Transverse colon (tissue), 4 donors: ENCODE measurements at regions of chr20 and their contacts with region 1.

Region 1: GRCh38 chr20:21048841-21049273 is 57.3 kb downstream of the LINC00237 start:
- DNase-seq: peak; percentile 28
- H3K4me3 ChIP-seq: no peak overlapping the region
- H3K27ac ChIP-seq: no peak overlapping the region
- H3K4me1 ChIP-seq: no peaks in the 10 kb centered on the region
- H3K27me3 ChIP-seq: peaks cover 7% of the 10 kb centered on the region
- CTCF ChIP-seq: peak; percentile 36 to 72 (median 51)
- EP300 ChIP-seq: no peak
- POLR2A ChIP-seq: no peak

Region 2: GRCh38 chr20:20993372-20993771 is 55.5 kb before region 1 on chr20:
- in situ Hi-C with region 1: no loop called
- intact Hi-C with region 1: loop called (anchors 2 kb)
- DNase-seq: no peak
- H3K4me3 ChIP-seq: no peak overlapping the region
- H3K27ac ChIP-seq: no peak overlapping the region
- H3K4me1 ChIP-seq: no peaks in the 10 kb centered on the region
- H3K27me3 ChIP-seq: no peaks in the 10 kb centered on the region
- CTCF ChIP-seq: no peak
- EP300 ChIP-seq: no peak
- POLR2A ChIP-seq: no peak

Region 3: GRCh38 chr20:21074605-21075336 is 25.9 kb after region 1 on chr20:
- in situ Hi-C with region 1: no loop called
- intact Hi-C with region 1: no loop called
- DNase-seq: no peak
- H3K4me3 ChIP-seq: no peak overlapping the region
- H3K27ac ChIP-seq: no peak overlapping the region
- H3K4me1 ChIP-seq: no peaks in the 10 kb centered on the region
- H3K27me3 ChIP-seq: peaks cover 18% of the 10 kb centered on the region
- CTCF ChIP-seq: no peak
- EP300 ChIP-seq: no peak
- POLR2A ChIP-seq: no peak